Cardiac septum (tissue), 1 donor: ENCODE measurements at regions of chr1 and their contacts with region 1.

Region 1: DNA sequence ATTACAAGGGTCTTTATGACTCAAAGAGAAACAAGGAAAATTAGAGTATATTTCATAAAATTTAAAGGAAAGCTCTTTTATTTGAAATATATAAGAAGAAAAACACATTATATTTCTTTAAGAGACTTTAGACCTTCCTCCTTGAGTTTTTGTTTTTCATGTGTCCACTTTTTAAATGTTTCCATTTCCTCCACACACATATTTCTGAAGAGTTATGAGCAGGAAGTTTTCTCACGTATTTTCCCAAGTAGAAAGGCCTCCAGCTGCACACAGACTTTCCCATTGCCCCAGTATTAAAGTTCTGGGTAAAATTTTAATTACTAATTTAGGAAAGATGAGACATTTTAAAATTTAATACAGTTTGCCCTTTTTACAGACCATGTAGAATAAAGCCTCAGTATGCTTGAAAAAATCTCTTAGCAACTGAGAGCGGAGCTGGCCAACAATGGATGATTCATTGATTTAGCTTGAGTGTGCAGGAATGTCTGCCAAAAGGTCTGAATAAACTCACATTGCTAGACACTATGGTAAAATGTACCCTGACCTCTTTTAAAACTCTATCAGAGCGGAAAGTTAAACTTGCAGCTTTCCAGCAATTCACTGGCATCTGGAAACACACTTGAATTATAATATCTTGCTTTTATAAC is 57.9 kb downstream of the DDAH1 start:
- DNase-seq: no peak

Region 2: DNA sequence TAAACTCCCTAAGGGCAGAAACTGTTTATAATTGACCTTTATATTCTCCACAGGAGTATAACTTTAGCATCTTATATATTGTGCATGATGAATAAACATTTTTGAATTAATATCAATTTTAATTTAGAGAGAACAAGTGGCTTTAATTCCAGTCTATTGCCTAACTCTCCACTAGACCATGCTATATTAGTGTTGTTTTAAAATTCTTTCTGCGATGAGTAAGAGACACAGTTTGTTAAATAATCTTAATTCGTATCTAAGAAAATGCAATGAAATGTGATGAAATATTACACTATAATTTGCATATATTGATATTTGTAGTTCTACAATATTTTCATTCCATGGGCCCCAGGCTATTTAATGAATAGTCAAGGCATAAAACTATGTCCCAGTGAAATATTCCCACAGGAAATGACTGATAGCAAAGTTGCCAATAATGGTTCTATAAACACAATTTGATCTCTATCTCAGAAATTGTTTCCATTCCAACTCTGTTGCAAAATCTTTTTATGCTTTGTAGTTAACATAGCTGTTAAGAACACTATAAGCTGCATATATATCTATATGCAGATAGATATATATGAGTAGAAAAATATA is 203.3 kb before region 1 on chr1:
- intact Hi-C with region 1: no loop called
- DNase-seq: no peak

Region 3: DNA sequence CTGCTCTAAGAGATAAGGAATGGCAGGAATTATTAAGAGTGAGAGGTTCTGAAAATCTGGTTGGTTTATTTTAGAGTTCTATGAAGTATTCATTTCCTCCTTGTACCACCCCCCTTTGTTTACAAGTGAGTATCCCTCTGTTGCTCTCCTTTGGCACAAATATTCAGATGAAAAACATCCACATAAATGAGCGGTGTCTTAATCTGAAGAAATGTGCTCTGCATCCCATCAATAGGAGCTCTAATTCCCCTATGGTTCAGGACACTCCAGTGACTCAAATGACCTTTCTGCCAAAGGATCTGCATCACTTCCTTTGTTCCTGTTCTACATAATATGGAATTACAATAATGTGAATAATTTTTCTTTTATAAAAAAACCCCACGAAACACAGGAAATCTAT is 41.3 kb after region 1 on chr1:
- intact Hi-C with region 1: loop called (anchors 5 kb)
- DNase-seq: no peak

Region 4: GRCh38 chr1:85623051-85623471 is 216.1 kb after region 1 on chr1:
- intact Hi-C with region 1: no loop called
- DNase-seq: no peak